ENCODE measurements at regions of chr1 and their contacts with region 1.

Region 1: DNA sequence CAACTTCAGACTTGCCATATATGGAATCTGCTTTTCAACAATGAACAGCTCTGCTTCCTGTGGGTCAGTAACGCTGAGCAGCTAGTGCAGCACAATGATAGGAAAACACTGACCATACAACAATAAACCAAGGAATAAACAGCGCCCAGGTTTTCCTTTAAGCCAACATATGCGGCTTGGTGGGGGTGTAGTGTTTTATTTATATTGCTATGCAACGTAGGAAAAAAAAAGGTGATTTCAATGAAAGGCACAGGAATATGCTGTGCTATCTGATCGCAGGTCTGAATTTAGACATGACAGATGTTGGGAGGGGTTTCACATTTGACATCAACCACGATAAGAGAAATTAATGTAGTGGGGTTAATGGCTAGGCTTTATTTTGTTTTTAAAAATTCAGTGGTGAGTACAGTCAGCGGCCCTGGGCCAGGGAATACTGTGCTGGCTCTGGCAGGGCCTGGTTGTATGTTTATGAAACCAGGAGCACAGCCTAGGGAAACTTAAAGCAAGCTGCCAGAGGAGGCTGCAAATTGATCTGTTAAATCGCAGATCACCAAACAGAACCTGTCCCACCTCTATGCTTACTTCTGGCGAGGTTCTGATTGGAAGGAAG is 4.3 kb downstream of the TSPAN2 start:
- DNase-seq: no peak
- H3K4me3 ChIP-seq: no peak overlapping the region
- H3K27ac ChIP-seq: no peak overlapping the region
- H3K4me1 ChIP-seq: peaks cover 5% of the 10 kb centered on the region
- CTCF ChIP-seq: no peak

Region 2: DNA sequence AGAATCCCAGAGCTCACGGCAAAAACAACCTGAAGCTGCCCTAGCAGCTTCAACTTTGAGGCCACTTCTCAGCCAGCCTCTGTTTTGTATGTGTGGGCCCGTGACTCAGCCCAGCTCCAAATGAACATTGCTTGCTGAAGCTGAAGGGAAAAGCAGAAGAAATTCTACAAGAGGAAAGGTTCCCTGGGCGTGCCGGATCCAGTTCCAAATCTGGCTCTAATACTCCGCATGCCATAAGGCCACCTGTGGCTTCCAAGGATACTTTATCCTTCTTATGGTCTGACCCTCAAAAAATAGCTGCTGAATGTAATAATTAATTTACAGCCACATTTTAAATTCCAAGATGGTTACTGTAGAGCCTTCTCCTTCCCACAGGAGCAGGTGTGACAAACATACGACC is 20.0 kb before region 1 on chr1:
- CTCF ChIA-PET with region 1: no interaction called
- POLR2A ChIA-PET with region 1: no interaction called
- intact Hi-C with region 1: loop called (anchors 2 kb)
- DNase-seq: no peak
- H3K4me3 ChIP-seq: no peak overlapping the region
- H3K27ac ChIP-seq: no peak overlapping the region
- H3K4me1 ChIP-seq: no peaks in the 10 kb centered on the region
- CTCF ChIP-seq: no peak

Measured in OCI-LY7 (cell line).